Heart left ventricle (tissue), 16 donors: ENCODE measurements at regions of chr4 and their contacts with region 1.

Region 1: DNA sequence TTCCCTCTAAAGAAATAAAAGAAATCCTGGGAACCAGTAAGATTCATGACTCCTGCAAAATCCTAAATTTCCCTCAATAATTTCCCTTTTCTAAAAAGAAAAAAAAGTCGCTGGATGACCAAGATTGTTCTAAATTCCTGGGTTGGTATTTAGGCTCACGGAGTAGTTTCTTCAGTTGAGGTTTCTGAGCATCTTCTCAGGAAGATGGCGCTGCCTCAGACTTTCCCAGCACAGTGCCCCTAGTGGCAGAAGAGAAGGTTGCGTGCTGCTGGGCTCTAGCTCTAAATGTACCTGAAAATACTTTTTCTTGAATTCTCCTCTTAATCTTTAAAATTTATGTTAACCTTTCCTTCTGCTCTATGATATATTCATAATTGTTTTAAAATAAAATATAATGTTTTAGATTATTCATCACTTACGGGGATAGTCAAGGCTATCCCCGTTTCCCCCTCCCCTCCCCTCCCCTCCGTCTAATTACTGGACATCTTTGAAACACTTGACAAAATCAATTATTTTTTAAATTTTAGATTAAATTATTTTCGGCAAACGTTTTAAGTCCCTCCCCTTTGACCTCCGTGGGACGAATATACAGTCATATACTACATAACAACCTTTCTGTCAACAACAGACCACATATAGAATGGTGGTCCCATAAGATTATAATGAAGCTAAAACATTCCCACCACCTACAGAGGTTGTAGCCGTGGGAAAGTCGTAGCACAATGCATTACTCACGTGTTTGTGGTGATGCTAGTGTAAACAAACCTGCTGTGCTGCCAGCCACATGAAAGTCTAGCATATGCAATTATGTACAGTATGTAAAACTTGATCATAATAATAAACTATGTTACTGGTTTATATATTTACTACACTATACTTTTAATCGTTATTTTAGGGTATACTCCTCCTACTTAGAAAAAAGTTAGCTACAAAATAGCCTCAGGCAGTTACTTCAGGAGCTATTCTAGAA is 41.0 kb upstream of the GATB start:
- DNase-seq: no peak
- ATAC-seq: no peak
- H3K4me3 ChIP-seq: no peak overlapping the region
- H3K27ac ChIP-seq: peak overlapping the region in 1 of 12 donors; percentile 6
- H3K4me1 ChIP-seq: peaks cover 0 to 35% (median 3%) of the 10 kb centered on the region in 12 donors
- H3K27me3 ChIP-seq: no peaks in the 10 kb centered on the region
- CTCF ChIP-seq: peak; percentile 57 to 84 (median 72)
- POLR2A ChIP-seq: no peak

Region 2: GRCh38 chr4:151690164-151690870 is 111.5 kb before region 1 on chr4:
- intact Hi-C with region 1: loop called in 1 of 10 experiments (anchors 10 kb)
- DNase-seq: no peak
- ATAC-seq: no peak
- H3K4me3 ChIP-seq: no peak overlapping the region
- H3K27ac ChIP-seq: peak overlapping the region in 10 of 12 donors; percentile 38 to 84 (median 70)
- H3K4me1 ChIP-seq: peaks cover 2 to 84% (median 57%) of the 10 kb centered on the region in 12 donors
- H3K27me3 ChIP-seq: no peaks in the 10 kb centered on the region
- CTCF ChIP-seq: no peak
- POLR2A ChIP-seq: no peak

Region 3: GRCh38 chr4:151957153-151957552 is 155.3 kb after region 1 on chr4:
- intact Hi-C with region 1: loop called in 1 of 10 experiments (anchors 5 kb)
- DNase-seq: peak in 3 of 5 donors; percentile 20 to 38 (median 30)
- ATAC-seq: peak in 3 of 4 donors; percentile 32 to 62 (median 50)
- H3K4me3 ChIP-seq: no peak overlapping the region
- H3K27ac ChIP-seq: peak overlapping the region in 7 of 12 donors; percentile 28 to 75 (median 49)
- H3K4me1 ChIP-seq: peaks cover 0 to 30% (median 10%) of the 10 kb centered on the region in 12 donors
- H3K27me3 ChIP-seq: no peaks in the 10 kb centered on the region
- CTCF ChIP-seq: peak in 3 of 12 donors; percentile 7 to 31 (median 13)
- POLR2A ChIP-seq: no peak

Region 4: GRCh38 chr4:152032722-152033131 is 230.9 kb after region 1 on chr4:
- intact Hi-C with region 1: loop called in 2 of 10 experiments (anchors 10 kb)
- DNase-seq: peak in 1 of 5 donors; percentile 58
- ATAC-seq: peak; percentile 33 to 85 (median 62)
- H3K4me3 ChIP-seq: no peak overlapping the region
- H3K27ac ChIP-seq: peak overlapping the region in 10 of 12 donors; percentile 20 to 75 (median 54)
- H3K4me1 ChIP-seq: peaks cover 0 to 21% (median 2%) of the 10 kb centered on the region in 12 donors
- H3K27me3 ChIP-seq: no peaks in the 10 kb centered on the region
- CTCF ChIP-seq: no peak
- POLR2A ChIP-seq: no peak

Region 5: DNA sequence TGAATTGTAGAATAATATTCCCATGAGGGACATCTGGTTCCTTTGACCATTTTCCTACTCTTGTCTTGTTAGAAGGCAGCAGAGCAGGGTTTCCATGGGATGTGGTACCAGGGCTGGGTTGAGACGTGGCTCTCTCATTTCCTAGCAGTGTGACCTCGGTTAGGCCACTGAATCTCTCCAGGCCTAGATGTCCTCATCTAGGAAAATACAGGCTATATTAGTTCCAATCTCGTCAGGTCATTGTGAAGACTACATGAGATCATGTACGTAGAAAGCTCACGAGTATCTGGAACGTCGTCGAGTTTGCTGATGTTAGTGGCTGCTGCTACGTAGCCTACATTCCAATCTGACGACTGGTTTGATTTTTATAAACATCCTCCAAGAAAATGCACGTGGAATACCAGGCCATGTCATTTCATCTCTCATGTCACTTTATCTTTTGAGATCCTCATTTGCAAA is 237.2 kb after region 1 on chr4:
- intact Hi-C with region 1: loop called in 5 of 10 experiments (anchors 1 to 10 kb)
- DNase-seq: peak in 2 of 5 donors; percentile 27 to 74
- ATAC-seq: peak; percentile 83 to 94 (median 86)
- H3K4me3 ChIP-seq: no peak overlapping the region
- H3K27ac ChIP-seq: peak overlapping the region; percentile 47 to 99 (median 89)
- H3K4me1 ChIP-seq: peaks cover 0 to 21% (median 5%) of the 10 kb centered on the region in 12 donors
- H3K27me3 ChIP-seq: no peaks in the 10 kb centered on the region
- CTCF ChIP-seq: no peak
- POLR2A ChIP-seq: no peak

Region 6: GRCh38 chr4:152045807-152046571 is 244.2 kb after region 1 on chr4:
- intact Hi-C with region 1: loop called in 1 of 10 experiments (anchors 10 kb)
- DNase-seq: peak in 4 of 5 donors; percentile 42 to 77 (median 46)
- ATAC-seq: peak in 3 of 4 donors; percentile 64 to 78 (median 68)
- H3K4me3 ChIP-seq: peak overlapping the region in 7 of 12 donors; percentile 4 to 24 (median 19)
- H3K27ac ChIP-seq: peak overlapping the region in 7 of 12 donors; percentile 23 to 66 (median 57)
- H3K4me1 ChIP-seq: peaks cover 0 to 17% (median 9%) of the 10 kb centered on the region in 12 donors
- H3K27me3 ChIP-seq: peaks cover 0 to 17% (median 0%) of the 10 kb centered on the region in 9 donors
- CTCF ChIP-seq: peak; percentile 44 to 73 (median 50)
- POLR2A ChIP-seq: no peak

Region 7: GRCh38 chr4:152094970-152095700 is 293.3 kb after region 1 on chr4:
- intact Hi-C with region 1: loop called in 2 of 10 experiments (anchors 2 to 5 kb)
- DNase-seq: no peak
- ATAC-seq: no peak
- H3K4me3 ChIP-seq: no peak overlapping the region
- H3K27ac ChIP-seq: no peak overlapping the region
- H3K4me1 ChIP-seq: peaks cover 0 to 16% (median 5%) of the 10 kb centered on the region in 12 donors
- H3K27me3 ChIP-seq: no peaks in the 10 kb centered on the region
- CTCF ChIP-seq: no peak
- POLR2A ChIP-seq: no peak